H1 (cell line): ENCODE measurements at regions of chr3 and their contacts with region 1.

Region 1: DNA sequence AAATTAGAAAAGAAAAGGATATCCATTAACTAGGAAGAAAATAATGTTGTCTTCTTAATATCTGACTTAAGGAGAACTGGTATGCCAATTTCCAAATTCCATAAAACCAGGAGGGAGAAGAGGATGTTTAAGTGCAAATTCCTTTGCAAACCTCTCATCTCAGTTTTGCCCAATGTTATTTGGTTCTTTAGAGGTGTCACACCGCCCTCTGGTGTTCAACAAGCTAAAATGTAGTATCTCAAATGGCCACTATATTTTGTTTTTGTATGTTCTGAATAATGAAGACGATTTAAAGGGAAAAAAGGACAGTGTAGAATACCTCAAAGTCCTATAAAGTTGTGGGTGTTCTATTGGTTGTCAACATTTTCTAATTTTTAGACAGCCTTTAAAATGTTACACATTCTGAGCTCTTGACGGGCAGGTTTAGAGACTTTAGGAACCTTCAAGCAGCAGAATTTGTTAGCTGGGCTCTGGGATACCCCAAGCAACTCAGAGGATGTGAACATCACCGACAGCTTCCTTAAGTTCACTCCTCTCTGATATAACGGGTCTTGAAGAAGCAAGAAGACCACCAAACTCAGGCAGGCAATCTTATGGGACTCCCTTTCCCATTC is 458.3 kb downstream of the MFSD1 start:
- DNase-seq: no peak
- H3K4me3 ChIP-seq: no peak overlapping the region
- H3K27ac ChIP-seq: no peak overlapping the region
- H3K4me1 ChIP-seq: no peaks in the 10 kb centered on the region
- H3K27me3 ChIP-seq: no peaks in the 10 kb centered on the region
- CTCF ChIP-seq: peak in 2 of 3 experiments; percentile 56 to 76; a peak in 3 of 4 replicates
- EP300 ChIP-seq: no peak
- POLR2A ChIP-seq: no peak
- RAD21 ChIP-seq: peak; percentile 82 to 87

Region 2: DNA sequence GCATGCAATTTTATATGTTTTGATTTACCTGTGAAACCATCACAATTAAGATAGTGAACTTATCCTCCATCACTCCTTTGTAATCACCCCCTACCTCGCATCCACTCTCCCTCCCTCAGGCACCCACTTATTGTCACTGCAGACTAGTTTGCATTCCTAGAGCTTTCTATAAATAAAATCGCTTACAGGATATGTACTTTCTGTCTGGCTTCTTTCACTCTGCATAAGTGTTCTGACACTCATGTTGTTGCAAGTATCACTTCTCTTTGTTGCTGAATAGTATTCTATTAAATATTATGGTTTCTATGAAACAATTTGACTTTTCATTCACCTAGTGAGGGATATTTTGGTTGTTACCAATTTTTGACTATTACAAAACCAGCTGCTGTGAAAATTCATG is 1011.0 kb before region 1 on chr3:
- CTCF ChIA-PET with region 1: no interaction called
- POLR2A ChIA-PET with region 1: no interaction called
- DNase-seq: no peak
- H3K4me3 ChIP-seq: no peak overlapping the region
- H3K27ac ChIP-seq: no peak overlapping the region
- H3K4me1 ChIP-seq: no peaks in the 10 kb centered on the region
- H3K27me3 ChIP-seq: no peaks in the 10 kb centered on the region
- CTCF ChIP-seq: no peak
- EP300 ChIP-seq: no peak
- POLR2A ChIP-seq: no peak
- RAD21 ChIP-seq: no peak

Region 3: DNA sequence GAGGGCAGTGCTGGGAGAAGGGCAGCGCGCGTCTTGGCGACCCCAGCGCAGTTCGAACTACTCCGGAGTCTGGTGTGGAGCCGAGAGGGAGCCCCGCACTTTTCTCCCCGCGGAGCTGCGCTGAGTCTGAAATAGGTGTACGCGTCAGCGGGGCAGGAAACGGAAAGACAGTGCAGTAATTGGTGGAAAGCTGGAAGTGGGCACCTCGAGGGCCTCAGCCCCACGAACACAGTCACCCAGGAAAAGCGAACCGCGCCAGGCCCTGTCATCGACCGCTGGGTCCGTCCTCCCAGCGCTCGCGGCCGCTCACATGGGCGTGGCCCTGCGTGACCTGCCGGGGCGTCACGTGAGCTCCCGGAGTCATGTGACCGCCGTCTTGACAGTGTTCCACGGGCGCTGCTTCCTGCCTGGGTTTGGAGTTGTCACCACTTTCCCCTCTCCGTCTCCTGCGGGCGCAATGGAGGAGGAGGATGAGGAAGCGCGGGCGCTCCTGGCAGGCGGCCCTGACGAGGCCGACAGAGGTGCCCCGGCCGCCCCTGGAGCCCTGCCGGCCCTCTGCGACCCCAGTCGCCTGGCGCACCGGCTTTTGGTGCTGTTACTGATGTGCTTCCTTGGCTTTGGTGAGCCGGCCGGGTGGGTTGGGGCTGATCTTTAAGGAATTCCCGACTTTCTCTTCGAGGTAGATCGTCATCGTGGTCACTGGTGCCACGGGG is 458.3 kb before region 1 on chr3 and contains the start of gene MFSD1:
- CTCF ChIA-PET with region 1: interaction called, 28 read pairs
- POLR2A ChIA-PET with region 1: no interaction called
- DNase-seq: peak in 1 of 2 experiments; percentile 89
- H3K4me3 ChIP-seq: peak within 1 kb of the TSS; percentile 48 to 90 (median 82)
- H3K27ac ChIP-seq: no peak within 1 kb of the TSS
- H3K4me1 ChIP-seq: peaks cover 0 to 9% (median 2%) of the 10 kb centered on the region in 4 experiments; a peak in 2 of 7 replicates
- H3K27me3 ChIP-seq: peaks cover 8 to 18% (median 15%) of the 10 kb centered on the region in 4 experiments
- CTCF ChIP-seq: no peak
- EP300 ChIP-seq: peak in 1 of 2 experiments; percentile 17; a peak in 1 of 3 replicates
- POLR2A ChIP-seq: peak in 1 of 2 experiments; percentile 50; a peak in 2 of 3 replicates
- RAD21 ChIP-seq: no peak
- total RNA-seq, gene MFSD1: 9.3 and 11.0 TPM in 2 replicates

Region 4: GRCh38 chr3:158912188-158912587 is 348.0 kb before region 1 on chr3:
- CTCF ChIA-PET with region 1: interaction called, 41 read pairs
- POLR2A ChIA-PET with region 1: no interaction called
- DNase-seq: no peak
- H3K4me3 ChIP-seq: no peak overlapping the region
- H3K27ac ChIP-seq: no peak overlapping the region
- H3K4me1 ChIP-seq: no peaks in the 10 kb centered on the region
- H3K27me3 ChIP-seq: no peaks in the 10 kb centered on the region
- CTCF ChIP-seq: peak in 2 of 3 experiments; percentile 45 to 55; a peak in 2 of 4 replicates
- EP300 ChIP-seq: no peak
- POLR2A ChIP-seq: no peak
- RAD21 ChIP-seq: peak; percentile 55 to 67

Region 5: DNA sequence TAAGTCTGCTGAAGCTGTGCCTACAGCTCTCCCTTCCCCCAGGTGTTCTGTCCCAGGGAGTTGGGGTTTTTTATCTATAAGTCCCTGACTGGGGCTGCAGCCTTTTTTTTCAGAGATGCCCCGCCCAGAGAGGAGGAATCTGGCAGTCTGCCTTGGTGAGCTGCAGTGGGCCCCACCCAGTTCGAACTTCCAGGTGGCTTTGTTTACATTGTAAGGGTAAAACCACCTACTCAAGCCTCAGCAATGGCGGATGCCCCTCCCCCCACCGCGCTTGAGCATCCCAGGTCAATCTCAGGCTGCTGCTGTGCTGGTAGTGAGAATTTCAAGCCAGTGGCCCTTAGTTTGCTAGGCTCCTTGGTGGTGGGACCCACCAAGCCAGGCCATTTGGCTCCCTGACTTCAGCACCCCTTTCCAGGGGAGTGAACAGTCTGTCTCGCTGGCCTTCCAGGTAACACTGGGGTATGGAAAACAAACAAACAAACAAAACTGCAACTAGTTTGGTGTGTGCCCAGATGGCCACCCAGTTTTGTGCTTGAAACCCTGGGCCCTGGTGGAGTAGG is 268.9 kb before region 1 on chr3:
- CTCF ChIA-PET with region 1: no interaction called
- POLR2A ChIA-PET with region 1: no interaction called
- DNase-seq: peak; percentile 49 to 71
- H3K4me3 ChIP-seq: no peak overlapping the region
- H3K27ac ChIP-seq: no peak overlapping the region
- H3K4me1 ChIP-seq: peaks cover 0 to 3% (median 2%) of the 10 kb centered on the region in 4 experiments; a peak in 3 of 7 replicates
- H3K27me3 ChIP-seq: no peaks in the 10 kb centered on the region
- CTCF ChIP-seq: no peak
- EP300 ChIP-seq: 0 out of 3 replicates have a peak, but pooled peaks of 1 of the 2 experiments have one; percentile 8
- POLR2A ChIP-seq: no peak
- RAD21 ChIP-seq: peak in 1 of 2 experiments; percentile 6; a peak in 1 of 4 replicates

Region 6: GRCh38 chr3:159029306-159030026 is 230.7 kb before region 1 on chr3:
- CTCF ChIA-PET with region 1: no interaction called
- POLR2A ChIA-PET with region 1: no interaction called
- DNase-seq: no peak
- H3K4me3 ChIP-seq: no peak overlapping the region
- H3K27ac ChIP-seq: no peak overlapping the region
- H3K4me1 ChIP-seq: no peaks in the 10 kb centered on the region
- H3K27me3 ChIP-seq: no peaks in the 10 kb centered on the region
- CTCF ChIP-seq: no peak
- EP300 ChIP-seq: no peak
- POLR2A ChIP-seq: no peak
- RAD21 ChIP-seq: no peak

Region 7: GRCh38 chr3:159130108-159130507 is 130.0 kb before region 1 on chr3:
- CTCF ChIA-PET with region 1: interaction called, 16 read pairs
- POLR2A ChIA-PET with region 1: no interaction called
- DNase-seq: peak; percentile 5 to 69
- H3K4me3 ChIP-seq: no peak overlapping the region
- H3K27ac ChIP-seq: no peak overlapping the region
- H3K4me1 ChIP-seq: no peaks in the 10 kb centered on the region
- H3K27me3 ChIP-seq: no peaks in the 10 kb centered on the region
- CTCF ChIP-seq: peak in 2 of 3 experiments; percentile 66 to 78; a peak in 3 of 4 replicates
- EP300 ChIP-seq: no peak
- POLR2A ChIP-seq: no peak
- RAD21 ChIP-seq: peak; percentile 67 to 75

Region 8: GRCh38 chr3:159280386-159281191 is 20.4 kb after region 1 on chr3:
- CTCF ChIA-PET with region 1: interaction called, 18 read pairs
- POLR2A ChIA-PET with region 1: no interaction called
- DNase-seq: no peak
- H3K4me3 ChIP-seq: no peak overlapping the region
- H3K27ac ChIP-seq: no peak overlapping the region
- H3K4me1 ChIP-seq: no peaks in the 10 kb centered on the region
- H3K27me3 ChIP-seq: no peaks in the 10 kb centered on the region
- CTCF ChIP-seq: no peak
- EP300 ChIP-seq: no peak
- POLR2A ChIP-seq: no peak
- RAD21 ChIP-seq: no peak

Region 9: GRCh38 chr3:159732172-159733111 is 472.3 kb after region 1 on chr3:
- CTCF ChIA-PET with region 1: interaction called, 14 read pairs
- POLR2A ChIA-PET with region 1: no interaction called
- DNase-seq: peak; percentile 41 to 59
- H3K4me3 ChIP-seq: peak overlapping the region; percentile 26 to 56 (median 33); a peak in 7 of 8 replicates
- H3K27ac ChIP-seq: peak overlapping the region; percentile 54
- H3K4me1 ChIP-seq: peaks cover 2 to 11% (median 7%) of the 10 kb centered on the region in 4 experiments; a peak in 4 of 7 replicates
- H3K27me3 ChIP-seq: no peaks in the 10 kb centered on the region
- CTCF ChIP-seq: no peak
- EP300 ChIP-seq: no peak
- POLR2A ChIP-seq: peak in 1 of 2 experiments; percentile 64; a peak in 1 of 3 replicates
- RAD21 ChIP-seq: peak; percentile 1 to 25; a peak in 1 of 4 replicates

Region 10: GRCh38 chr3:160003520-160004128 is 743.5 kb after region 1 on chr3:
- CTCF ChIA-PET with region 1: interaction called, 22 read pairs
- POLR2A ChIA-PET with region 1: no interaction called
- DNase-seq: peak in 1 of 2 experiments; percentile 76
- H3K4me3 ChIP-seq: no peak overlapping the region
- H3K27ac ChIP-seq: no peak overlapping the region
- H3K4me1 ChIP-seq: peaks cover 0 to 6% (median 3%) of the 10 kb centered on the region in 4 experiments; a peak in 3 of 7 replicates
- H3K27me3 ChIP-seq: no peaks in the 10 kb centered on the region
- CTCF ChIP-seq: peak; percentile 76 to 78 (median 77)
- EP300 ChIP-seq: no peak
- POLR2A ChIP-seq: no peak
- RAD21 ChIP-seq: peak; percentile 65 to 76